Motor neuron (in vitro differentiated cells): ENCODE measurements at regions of chr10 and their contacts with region 1.

Region 1: GRCh38 chr10:71383972-71384687 is 12.6 kb upstream of the CDH23 start:
- ATAC-seq: peak; percentile 82 to 94 (median 89)
- H3K4me3 ChIP-seq: no peak overlapping the region
- H3K27ac ChIP-seq: no peak overlapping the region
- H3K4me1 ChIP-seq: peaks cover 0 to 7% of the 10 kb centered on the region in 2 donors

Region 2: DNA sequence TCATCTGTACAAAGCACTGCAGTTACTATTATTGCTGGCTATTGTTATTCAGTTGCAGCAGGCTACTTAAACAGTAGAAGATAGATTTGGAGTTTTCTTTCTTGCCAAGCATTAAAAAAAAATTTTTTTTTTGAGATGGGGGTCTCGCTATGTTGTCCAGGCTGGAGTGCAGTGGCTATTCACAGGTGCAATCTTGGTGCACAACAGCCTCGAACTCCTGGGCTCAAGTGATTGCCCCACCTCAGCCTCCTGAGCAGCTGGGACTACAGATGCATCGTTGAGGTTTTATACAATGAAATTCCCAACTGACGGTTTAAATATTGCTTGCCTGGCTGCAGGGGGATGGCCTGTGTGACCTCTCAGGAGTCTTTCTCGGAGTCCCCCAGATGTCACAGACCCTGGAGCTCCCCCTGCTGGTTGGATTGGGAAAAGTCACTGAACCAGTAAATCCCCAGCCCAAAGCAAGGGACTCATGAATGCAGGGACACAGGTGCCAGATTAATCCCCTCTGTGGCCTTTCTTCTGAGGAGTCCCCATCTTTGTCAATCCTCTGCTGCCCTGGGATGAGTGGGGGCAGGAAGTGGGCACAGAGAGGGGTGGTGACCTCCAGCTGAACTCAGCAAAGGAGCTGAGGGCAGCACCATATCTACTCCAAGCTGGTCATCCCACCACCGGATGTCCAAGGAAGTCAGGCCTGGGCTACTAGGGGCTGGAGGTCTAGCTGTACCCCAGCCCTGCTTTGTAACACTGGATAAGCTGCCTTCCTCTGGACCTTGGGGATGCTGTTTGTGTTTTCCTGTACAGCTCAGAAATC is 185.9 kb after region 1 on chr10:
- in situ Hi-C with region 1: loop called in 3 of 9 experiments (anchors 25 kb)
- ATAC-seq: peak; percentile 29 to 76 (median 43)
- H3K4me3 ChIP-seq: no peak overlapping the region
- H3K27ac ChIP-seq: no peak overlapping the region
- H3K4me1 ChIP-seq: peaks cover 11 to 24% of the 10 kb centered on the region in 2 donors

Region 3: DNA sequence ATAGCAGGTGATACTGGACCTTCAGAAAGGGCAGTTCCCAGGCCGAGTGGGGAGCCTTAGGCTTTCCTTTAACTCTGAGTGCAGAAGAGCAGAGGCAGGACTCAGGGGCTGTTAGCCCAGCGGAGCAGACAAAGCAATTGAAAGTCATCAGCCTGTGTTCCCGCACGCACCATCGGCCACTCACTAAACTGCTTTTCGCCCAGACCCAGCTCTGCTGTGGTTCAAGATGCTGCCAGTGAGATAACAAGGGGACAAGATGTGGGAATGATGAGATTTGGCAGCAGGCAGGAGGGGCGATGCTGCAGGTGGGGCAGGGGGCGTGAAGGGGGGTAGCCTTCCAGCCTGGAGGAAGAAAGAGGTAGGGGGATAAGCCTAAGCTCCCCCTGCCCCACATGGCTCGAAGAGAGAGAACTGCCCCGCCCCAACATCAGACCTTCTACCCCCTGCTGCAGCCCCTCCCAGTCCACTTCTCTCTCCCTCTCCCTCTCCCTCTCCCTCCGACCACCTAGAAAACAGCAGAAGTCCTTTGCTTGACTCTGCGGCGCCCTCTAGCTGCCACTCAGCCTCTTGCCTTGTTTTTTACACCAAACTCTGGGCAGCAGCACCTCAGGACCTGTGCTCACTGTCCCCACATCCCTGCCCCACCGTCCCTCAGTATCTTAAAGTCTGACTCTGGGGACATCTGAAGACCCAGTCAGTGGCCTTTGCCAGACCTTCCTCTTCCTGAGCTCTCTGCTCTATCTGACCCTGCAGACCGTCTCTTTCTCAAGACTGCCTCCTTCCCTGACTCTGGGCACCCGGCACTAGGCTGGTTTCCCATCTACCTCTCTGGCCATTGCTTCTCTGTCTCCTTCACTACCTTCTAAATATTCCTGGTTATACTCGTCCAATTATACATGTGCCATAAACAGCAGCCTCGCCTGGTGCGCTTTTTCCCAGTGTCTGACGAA is 225.0 kb after region 1 on chr10:
- in situ Hi-C with region 1: loop called in 4 of 9 experiments (anchors 25 kb)
- ATAC-seq: peak; percentile 23 to 79 (median 70)
- H3K4me3 ChIP-seq: no peak overlapping the region
- H3K27ac ChIP-seq: no peak overlapping the region
- H3K4me1 ChIP-seq: peaks cover 35 to 42% of the 10 kb centered on the region in 2 donors

Region 4: DNA sequence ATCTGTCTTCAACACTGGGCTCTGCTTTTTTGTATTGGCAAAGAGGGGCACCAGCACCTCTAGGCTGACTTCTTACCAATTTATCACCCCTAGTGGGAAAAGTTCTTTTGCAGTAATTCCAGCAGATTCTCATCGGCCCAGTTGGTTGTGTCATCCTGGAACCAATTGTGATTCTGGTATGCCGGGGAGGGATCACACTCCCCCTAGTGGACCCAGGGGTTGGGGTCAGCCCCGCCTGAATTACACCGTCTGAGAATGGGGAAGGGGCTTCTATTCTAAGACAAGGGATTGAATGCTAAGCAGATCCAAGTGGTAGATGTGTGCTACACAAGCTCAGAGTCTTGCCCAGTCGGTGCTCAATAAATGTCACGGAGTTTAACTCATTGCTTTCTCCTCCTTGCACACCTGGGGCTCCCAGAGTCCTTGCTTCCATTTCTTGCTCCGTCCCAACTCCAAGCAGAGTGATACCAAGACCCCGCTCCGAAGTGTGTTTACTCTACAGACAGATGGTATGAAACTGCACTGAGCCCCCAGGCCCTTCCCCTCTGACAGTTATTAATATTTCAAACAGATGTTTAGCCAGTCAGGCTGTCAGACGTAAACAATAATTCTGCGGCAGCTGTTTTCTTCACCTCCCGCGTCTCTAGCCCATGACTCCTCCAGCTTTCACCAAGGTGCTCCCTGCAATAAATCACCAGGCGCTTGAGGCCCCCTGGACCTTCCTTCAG is 263.6 kb after region 1 on chr10:
- in situ Hi-C with region 1: no loop called
- ATAC-seq: peak in 6 of 8 experiments; percentile 30 to 69 (median 57)
- H3K4me3 ChIP-seq: no peak overlapping the region
- H3K27ac ChIP-seq: peak overlapping the region in 1 of 2 donors; percentile 27
- H3K4me1 ChIP-seq: peaks cover 14 to 18% of the 10 kb centered on the region in 2 donors